A673 (cell line): ENCODE measurements at regions of chr2 and their contacts with region 1.

Region 1: DNA sequence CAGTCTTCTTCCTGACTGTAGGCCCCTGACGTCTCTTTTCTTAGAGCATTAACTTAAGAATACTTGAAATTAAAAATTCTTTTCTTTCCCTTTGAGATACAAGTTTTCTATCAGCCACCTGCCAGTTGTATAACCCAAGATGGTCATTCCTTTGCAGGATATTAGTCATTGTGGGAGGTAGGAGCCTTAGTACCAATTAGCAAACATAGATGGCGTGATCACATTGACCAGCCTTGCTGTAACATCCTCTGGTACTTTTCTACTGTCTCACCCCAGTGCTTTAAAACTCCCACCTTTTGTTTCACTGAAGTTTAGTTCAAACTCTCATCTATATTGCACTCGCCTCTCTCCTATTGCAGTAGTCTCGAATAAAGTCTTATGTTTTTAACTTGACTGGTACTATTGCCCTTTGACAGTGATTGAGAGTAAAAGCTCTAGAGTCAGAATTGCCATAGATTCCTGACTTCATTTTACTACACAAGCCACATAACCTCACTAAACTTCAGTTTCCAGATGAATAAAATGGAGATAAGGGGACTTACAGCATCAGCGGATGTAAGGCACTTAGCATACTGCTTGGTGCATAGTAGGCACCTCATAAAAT is 74.1 kb downstream of the VRK2 start:
- DNase-seq: no peak
- H3K4me3 ChIP-seq: no peak overlapping the region
- H3K27ac ChIP-seq: no peak overlapping the region
- H3K4me1 ChIP-seq: no peaks in the 10 kb centered on the region
- H3K27me3 ChIP-seq: no peaks in the 10 kb centered on the region
- CTCF ChIP-seq: no peak

Region 2: DNA sequence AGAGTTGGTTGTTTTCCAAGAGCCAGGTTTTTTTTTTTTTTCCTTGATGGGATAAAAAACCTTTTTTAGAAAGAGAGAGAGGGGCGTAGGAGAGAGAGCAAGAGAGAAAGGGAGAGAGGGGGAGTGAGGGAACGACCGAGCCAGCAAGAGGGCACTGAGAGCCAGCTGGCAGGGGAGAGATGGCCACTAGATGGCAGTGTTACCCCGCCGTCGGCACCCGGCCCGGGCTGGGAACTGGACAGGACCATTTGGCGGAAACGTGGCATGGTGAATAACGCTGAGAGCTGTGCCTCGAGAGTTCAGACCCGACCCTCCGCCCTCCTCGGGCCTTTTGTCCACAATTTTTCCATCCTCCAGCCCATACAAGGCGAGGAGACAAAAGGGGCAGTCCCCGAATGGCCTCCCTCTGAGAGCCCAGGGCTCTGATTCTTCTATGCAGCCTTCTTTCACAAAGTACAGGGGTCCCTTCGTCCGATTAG is 360.9 kb before region 1 on chr2:
- CTCF ChIA-PET with region 1: no interaction called
- POLR2A ChIA-PET with region 1: no interaction called
- intact Hi-C with region 1: loop called (anchors 10 kb)
- DNase-seq: peak; percentile 85
- H3K4me3 ChIP-seq: peak overlapping the region; percentile 27
- H3K27ac ChIP-seq: no peak overlapping the region
- H3K4me1 ChIP-seq: peaks cover 13% of the 10 kb centered on the region
- H3K27me3 ChIP-seq: no peaks in the 10 kb centered on the region
- CTCF ChIP-seq: peak; percentile 94

Region 3: GRCh38 chr2:58350484-58350883 is 229.8 kb after region 1 on chr2:
- CTCF ChIA-PET with region 1: no interaction called
- POLR2A ChIA-PET with region 1: no interaction called
- intact Hi-C with region 1: no loop called
- DNase-seq: no peak
- H3K4me3 ChIP-seq: no peak overlapping the region
- H3K27ac ChIP-seq: no peak overlapping the region
- H3K4me1 ChIP-seq: no peaks in the 10 kb centered on the region
- H3K27me3 ChIP-seq: peaks cover 6% of the 10 kb centered on the region
- CTCF ChIP-seq: no peak